ENCODE measurements at regions of chr2 and their contacts with region 1.

Region 1: GRCh38 chr2:29528891-29529520 is 392.4 kb downstream of the ALK start:
- DNase-seq: no peak
- ATAC-seq: peak; percentile 35

Region 2: DNA sequence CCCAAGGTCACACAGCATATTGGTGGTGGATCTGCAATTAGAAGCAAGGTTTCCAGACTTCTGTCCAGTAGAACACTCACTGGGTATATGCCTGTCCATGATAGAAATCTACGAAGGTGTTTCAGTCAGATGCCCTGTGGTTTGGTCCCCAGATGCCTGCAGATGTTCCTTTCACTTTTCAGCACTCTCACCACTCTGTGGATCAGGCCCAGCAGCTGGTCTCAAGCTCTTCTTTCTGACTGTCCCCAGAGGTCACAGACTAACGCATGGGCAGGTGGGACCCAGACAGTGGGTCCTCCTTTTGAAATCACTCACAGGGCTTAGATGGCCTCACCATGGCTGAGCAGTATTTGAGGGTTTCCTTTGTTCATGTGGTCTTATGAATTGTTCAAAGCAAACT is 15.9 kb after region 1 on chr2:
- intact Hi-C with region 1: loop called (anchors 1 kb)
- DNase-seq: no peak
- ATAC-seq: no peak